ENCODE measurements at regions of chr2 and their contacts with region 1.

Region 1: GRCh38 chr2:165662720-165663119 is 131.3 kb downstream of the GALNT3 start:
- DNase-seq: no peak
- H3K4me3 ChIP-seq: no peak overlapping the region
- H3K27ac ChIP-seq: no peak overlapping the region
- H3K4me1 ChIP-seq: no peaks in the 10 kb centered on the region
- H3K27me3 ChIP-seq: no peaks in the 10 kb centered on the region
- CTCF ChIP-seq: no peak

Region 2: DNA sequence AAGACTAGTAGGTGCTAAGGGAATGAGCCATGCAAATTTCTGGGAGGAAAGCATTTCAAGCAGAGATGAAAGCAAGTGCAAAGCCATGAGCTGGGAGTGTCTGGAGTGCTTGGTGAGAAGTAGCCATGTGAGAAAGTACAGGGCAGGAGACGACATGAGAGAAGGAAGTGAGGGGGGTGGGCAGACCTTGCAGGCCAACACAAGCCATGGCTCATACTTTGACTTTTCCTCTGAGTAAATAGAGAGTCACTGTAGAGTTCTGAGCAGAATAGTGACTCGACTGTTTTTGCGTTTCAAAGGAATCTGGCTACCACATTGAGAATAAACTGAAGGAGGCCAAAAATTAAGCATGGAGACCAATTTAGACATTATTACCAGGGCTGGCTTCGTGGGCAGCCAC is 381.3 kb before region 1 on chr2:
- CTCF ChIA-PET with region 1: no interaction called
- POLR2A ChIA-PET with region 1: interaction called, 13 read pairs
- intact Hi-C with region 1: no loop called
- DNase-seq: no peak
- H3K4me3 ChIP-seq: no peak overlapping the region
- H3K27ac ChIP-seq: no peak overlapping the region
- H3K4me1 ChIP-seq: no peaks in the 10 kb centered on the region
- H3K27me3 ChIP-seq: no peaks in the 10 kb centered on the region
- CTCF ChIP-seq: no peak

Region 3: GRCh38 chr2:166042768-166043390 is 380.2 kb after region 1 on chr2:
- CTCF ChIA-PET with region 1: no interaction called
- POLR2A ChIA-PET with region 1: no interaction called
- intact Hi-C with region 1: no loop called
- DNase-seq: no peak
- H3K4me3 ChIP-seq: no peak overlapping the region
- H3K27ac ChIP-seq: no peak overlapping the region
- H3K4me1 ChIP-seq: no peaks in the 10 kb centered on the region
- H3K27me3 ChIP-seq: no peaks in the 10 kb centered on the region
- CTCF ChIP-seq: no peak

Measured in A673 (cell line).